Activated CD4-positive, alpha-beta memory T cell treated with anti-CD3 and anti-CD28 coated beads for 36 hours (primary cell): ENCODE measurements at regions of chr14 and their contacts with region 1.

Region 1: GRCh38 chr14:35285168-35286002 is 6.8 kb upstream of the PSMA6 start:
- DNase-seq: peak; percentile 35
- H3K4me3 Mint-ChIP-seq: peak overlapping the region; percentile 48
- H3K27ac Mint-ChIP-seq: peak overlapping the region; percentile 96
- H3K4me1 Mint-ChIP-seq: peaks cover 50% of the 10 kb centered on the region
- H3K27me3 Mint-ChIP-seq: no peaks in the 10 kb centered on the region

Region 2: GRCh38 chr14:35197015-35197414 is 88.4 kb before region 1 on chr14:
- CTCF ChIA-PET with region 1: no interaction called
- POLR2A ChIA-PET with region 1: interaction called, 4 read pairs
- intact Hi-C with region 1: loop called (anchors 2 kb)
- DNase-seq: no peak
- H3K4me3 Mint-ChIP-seq: no peak overlapping the region
- H3K27ac Mint-ChIP-seq: peak overlapping the region; percentile 65
- H3K4me1 Mint-ChIP-seq: peaks cover 34% of the 10 kb centered on the region
- H3K27me3 Mint-ChIP-seq: no peaks in the 10 kb centered on the region

Region 3: GRCh38 chr14:35229495-35230089 is 55.8 kb before region 1 on chr14:
- CTCF ChIA-PET with region 1: interaction called, 13 read pairs
- POLR2A ChIA-PET with region 1: interaction called, 4 read pairs
- intact Hi-C with region 1: no loop called
- DNase-seq: no peak
- H3K4me3 Mint-ChIP-seq: no peak overlapping the region
- H3K27ac Mint-ChIP-seq: peak overlapping the region; percentile 26
- H3K4me1 Mint-ChIP-seq: peaks cover 23% of the 10 kb centered on the region
- H3K27me3 Mint-ChIP-seq: no peaks in the 10 kb centered on the region

Region 4: GRCh38 chr14:35240231-35240630 is 45.2 kb before region 1 on chr14:
- CTCF ChIA-PET with region 1: no interaction called
- POLR2A ChIA-PET with region 1: no interaction called
- intact Hi-C with region 1: no loop called
- DNase-seq: no peak
- H3K4me3 Mint-ChIP-seq: no peak overlapping the region
- H3K27ac Mint-ChIP-seq: no peak overlapping the region
- H3K4me1 Mint-ChIP-seq: peaks cover 6% of the 10 kb centered on the region
- H3K27me3 Mint-ChIP-seq: no peaks in the 10 kb centered on the region

Region 5: GRCh38 chr14:35320472-35320871 is 35.1 kb after region 1 on chr14:
- CTCF ChIA-PET with region 1: interaction called, 4 read pairs
- POLR2A ChIA-PET with region 1: interaction called, 40 read pairs
- intact Hi-C with region 1: no loop called
- DNase-seq: no peak
- H3K4me3 Mint-ChIP-seq: no peak overlapping the region
- H3K27ac Mint-ChIP-seq: no peak overlapping the region
- H3K4me1 Mint-ChIP-seq: no peaks in the 10 kb centered on the region
- H3K27me3 Mint-ChIP-seq: no peaks in the 10 kb centered on the region

Region 6: GRCh38 chr14:35826218-35826951 is 541.0 kb after region 1 on chr14 and contains the start of gene BRMS1L:
- CTCF ChIA-PET with region 1: no interaction called
- POLR2A ChIA-PET with region 1: no interaction called
- intact Hi-C with region 1: loop called (anchors 5 kb)
- DNase-seq: peak; percentile 98
- H3K4me3 Mint-ChIP-seq: peak within 1 kb of the TSS; percentile 78
- H3K27ac Mint-ChIP-seq: peak within 1 kb of the TSS; percentile 93
- H3K4me1 Mint-ChIP-seq: peaks cover 23% of the 10 kb centered on the region
- H3K27me3 Mint-ChIP-seq: no peaks in the 10 kb centered on the region
- total RNA-seq, gene BRMS1L: 5.6 to 6.1 TPM